HCT116 (cell line): ENCODE measurements at regions of chr10 and their contacts with region 1.

Region 1: GRCh38 chr10:44352316-44353127 is 32.4 kb downstream of the CXCL12 start:
- DNase-seq: no peak
- ATAC-seq: no peak
- H3K4me3 ChIP-seq: no peak overlapping the region
- H3K27ac ChIP-seq: no peak overlapping the region
- H3K4me1 ChIP-seq: no peaks in the 10 kb centered on the region
- H3K27me3 ChIP-seq: peaks cover 9% of the 10 kb centered on the region; the same call in 1 of the 2 replicates
- CTCF ChIP-seq: no peak
- POLR2A ChIP-seq: no peak
- RAD21 ChIP-seq: no peak

Region 2: DNA sequence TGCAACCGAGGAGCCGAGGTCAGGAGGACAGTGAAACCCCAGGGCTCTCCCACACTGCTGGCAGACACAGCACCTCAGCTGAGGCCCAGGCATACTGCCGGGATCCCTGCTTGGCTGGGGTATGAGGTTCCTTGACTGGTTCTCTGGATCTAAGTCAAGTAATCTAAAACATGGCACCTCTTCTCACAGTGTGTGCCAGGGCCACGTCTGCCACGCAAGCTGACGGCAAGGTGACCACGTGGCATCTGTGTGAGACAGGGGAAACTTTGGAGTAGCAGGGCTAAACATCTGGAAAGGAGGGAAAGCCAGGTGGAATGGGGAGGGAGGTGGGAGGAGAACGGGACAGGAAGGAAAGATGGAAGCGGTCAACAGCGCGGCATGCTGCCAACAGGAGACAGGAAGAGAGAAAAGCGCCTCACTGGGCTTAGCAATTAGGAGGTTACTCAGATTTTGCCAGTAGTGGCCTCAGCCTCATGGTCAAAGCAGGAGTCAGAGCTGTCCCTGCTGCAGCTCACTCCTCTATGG is 71.4 kb before region 1 on chr10:
- CTCF ChIA-PET with region 1: no interaction called
- POLR2A ChIA-PET with region 1: no interaction called
- RAD21 ChIA-PET with region 1: no interaction called
- intact Hi-C with region 1: loop called (anchors 2 kb)
- DNase-seq: no peak
- ATAC-seq: no peak
- H3K4me3 ChIP-seq: no peak overlapping the region
- H3K27ac ChIP-seq: no peak overlapping the region
- H3K4me1 ChIP-seq: no peaks in the 10 kb centered on the region
- H3K27me3 ChIP-seq: peaks cover 27% of the 10 kb centered on the region; the same call in 1 of the 2 replicates
- CTCF ChIP-seq: no peak
- POLR2A ChIP-seq: no peak
- RAD21 ChIP-seq: no peak